ENCODE measurements at regions of chr10 and their contacts with region 1.

Region 1: DNA sequence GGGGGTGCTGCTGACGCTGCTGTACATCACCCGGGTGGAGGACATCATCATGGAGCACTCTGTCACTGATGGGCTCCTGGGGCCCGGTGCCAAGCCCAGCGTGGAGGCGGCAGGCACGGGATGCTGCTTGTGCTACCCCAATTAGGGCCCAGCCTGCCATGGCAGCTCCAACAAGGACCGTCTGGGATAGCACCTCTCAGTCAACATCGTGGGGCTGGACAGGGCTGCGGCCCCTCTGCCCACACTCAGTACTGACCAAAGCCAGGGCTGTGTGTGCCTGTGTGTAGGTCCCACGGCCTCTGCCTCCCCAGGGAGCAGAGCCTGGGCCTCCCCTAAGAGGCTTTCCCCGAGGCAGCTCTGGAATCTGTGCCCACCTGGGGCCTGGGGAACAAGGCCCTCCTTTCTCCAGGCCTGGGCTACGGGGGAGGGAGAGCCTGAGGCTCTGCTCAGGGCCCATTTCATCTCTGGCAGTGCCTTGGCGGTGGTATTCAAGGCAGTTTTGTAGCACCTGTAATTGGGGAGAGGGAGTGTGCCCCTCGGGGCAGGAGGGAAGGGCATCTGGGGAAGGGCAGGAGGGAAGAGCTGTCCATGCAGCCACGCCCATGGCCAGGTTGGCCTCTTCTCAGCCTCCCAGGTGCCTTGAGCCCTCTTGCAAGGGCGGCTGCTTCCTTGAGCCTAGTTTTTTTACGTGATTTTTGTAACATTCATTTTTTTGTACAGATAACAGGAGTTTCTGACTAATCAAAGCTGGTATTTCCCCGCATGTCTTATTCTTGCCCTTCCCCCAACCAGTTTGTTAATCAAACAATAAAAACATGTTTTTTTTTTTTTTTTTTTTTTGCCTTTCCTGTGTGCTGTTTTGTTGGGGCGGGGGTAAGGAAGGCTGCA is 55.8 kb downstream of the TSPAN15 start:
- DNase-seq: no peak
- ATAC-seq: peak; percentile 43
- H3K4me3 ChIP-seq: no peak overlapping the region
- H3K27ac ChIP-seq: peak overlapping the region in 1 of 2 donors; percentile 23
- H3K4me1 ChIP-seq: peaks cover 0 to 12% of the 10 kb centered on the region in 2 donors
- H3K27me3 ChIP-seq: no peaks in the 10 kb centered on the region
- CTCF ChIP-seq: no peak

Region 2: GRCh38 chr10:69237528-69238159 is 269.4 kb before region 1 on chr10:
- intact Hi-C with region 1: loop called in 1 of 2 experiments (anchors 10 kb)
- DNase-seq: peak; percentile 80 to 95 (median 86)
- ATAC-seq: peak; percentile 99
- H3K4me3 ChIP-seq: no peak overlapping the region
- H3K27ac ChIP-seq: no peak overlapping the region
- H3K4me1 ChIP-seq: peaks cover 0 to 20% of the 10 kb centered on the region in 2 donors
- H3K27me3 ChIP-seq: no peaks in the 10 kb centered on the region
- CTCF ChIP-seq: peak; percentile 92 to 93

Region 3: GRCh38 chr10:69413221-69413865 is 93.7 kb before region 1 on chr10:
- intact Hi-C with region 1: loop called in 1 of 2 experiments (anchors 10 kb)
- DNase-seq: peak in 2 of 4 donors; percentile 55 to 82
- ATAC-seq: peak; percentile 14
- H3K4me3 ChIP-seq: no peak overlapping the region
- H3K27ac ChIP-seq: no peak overlapping the region
- H3K4me1 ChIP-seq: peaks cover 3 to 17% of the 10 kb centered on the region in 2 donors
- H3K27me3 ChIP-seq: no peaks in the 10 kb centered on the region
- CTCF ChIP-seq: peak; percentile 42 to 50

Region 4: DNA sequence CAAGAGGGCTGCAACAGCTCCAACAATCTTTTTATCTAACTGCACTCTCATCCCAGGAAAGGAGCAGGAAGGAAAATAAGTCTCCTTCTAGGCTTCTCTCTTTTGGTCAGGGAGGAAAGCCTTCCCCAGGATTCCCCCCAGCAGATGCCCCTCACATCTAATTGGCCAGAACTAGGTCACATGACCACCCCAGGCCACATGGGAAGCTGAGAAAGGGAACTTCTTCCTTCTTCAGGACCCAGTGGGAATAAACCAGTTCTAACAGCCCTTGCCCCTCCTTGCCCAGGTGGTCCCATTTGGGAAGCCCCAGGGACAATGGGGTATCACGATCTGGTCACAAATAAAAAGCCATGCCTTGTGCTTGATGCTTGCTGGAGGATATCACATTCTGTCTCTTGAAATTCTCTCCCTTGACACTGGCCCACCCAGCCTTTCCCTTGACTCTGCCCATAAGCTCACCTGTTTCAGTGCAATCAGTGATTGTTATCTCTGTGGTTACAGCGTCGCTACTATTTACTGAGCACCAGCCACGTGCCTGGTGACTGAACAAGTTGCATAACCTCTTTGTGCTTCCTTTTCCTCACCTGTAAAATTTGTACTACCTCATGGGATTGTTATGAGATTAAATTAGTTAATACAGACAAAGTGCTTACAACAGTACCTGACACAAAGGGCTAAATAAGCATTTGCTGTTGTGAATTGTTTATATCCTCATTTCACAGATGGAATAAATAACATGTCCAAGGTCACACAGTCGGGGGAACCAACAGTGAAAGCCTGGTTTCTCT is 81.4 kb before region 1 on chr10:
- intact Hi-C with region 1: loop called in 1 of 2 experiments (anchors 5 kb)
- DNase-seq: no peak
- ATAC-seq: peak; percentile 38
- H3K4me3 ChIP-seq: no peak overlapping the region
- H3K27ac ChIP-seq: peak overlapping the region; percentile 36 to 58
- H3K4me1 ChIP-seq: peaks cover 0 to 28% of the 10 kb centered on the region in 2 donors
- H3K27me3 ChIP-seq: no peaks in the 10 kb centered on the region
- CTCF ChIP-seq: no peak

Measured in left lung (tissue), 14 donors.